Astrocyte of the cerebellum (primary cell): ENCODE measurements at regions of chr2 and their contacts with region 1.

Region 1: GRCh38 chr2:120589771-120590608 is 145.7 kb upstream of the GLI2 start:
- DNase-seq: peak; percentile 94
- H3K4me3 ChIP-seq: no peak overlapping the region
- CTCF ChIP-seq: no peak

Region 2: DNA sequence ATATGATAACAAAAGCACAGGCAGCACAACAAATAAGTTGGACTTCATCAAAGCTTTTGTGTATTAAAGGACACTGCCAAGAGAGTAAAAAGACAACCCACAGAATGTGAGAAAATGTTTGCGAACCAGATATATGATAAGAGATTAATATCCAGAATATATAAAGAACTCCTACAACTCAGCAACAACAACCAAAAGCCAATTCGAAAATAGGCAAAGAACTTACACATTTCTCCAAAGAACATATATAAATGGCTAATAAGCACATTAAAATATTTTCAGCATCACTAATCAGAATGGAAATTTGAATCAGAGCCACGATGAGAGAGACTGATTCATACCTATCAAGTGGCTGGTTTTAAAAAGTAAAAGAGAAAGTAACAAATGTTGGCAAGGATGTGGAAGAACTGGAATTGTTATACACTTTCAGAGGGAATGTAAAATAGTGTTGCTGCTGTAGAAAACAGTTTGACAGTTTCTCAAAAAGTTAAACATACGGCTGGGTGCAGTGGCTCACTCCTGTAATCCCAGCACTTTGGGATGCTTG is 551.9 kb before region 1 on chr2:
- in situ Hi-C with region 1: no loop called
- DNase-seq: no peak
- H3K4me3 ChIP-seq: no peak overlapping the region
- CTCF ChIP-seq: no peak

Region 3: GRCh38 chr2:120546048-120546864 is 43.7 kb before region 1 on chr2:
- in situ Hi-C with region 1: loop called (anchors 5 kb)
- DNase-seq: peak; percentile 59
- H3K4me3 ChIP-seq: no peak overlapping the region
- CTCF ChIP-seq: no peak

Region 4: DNA sequence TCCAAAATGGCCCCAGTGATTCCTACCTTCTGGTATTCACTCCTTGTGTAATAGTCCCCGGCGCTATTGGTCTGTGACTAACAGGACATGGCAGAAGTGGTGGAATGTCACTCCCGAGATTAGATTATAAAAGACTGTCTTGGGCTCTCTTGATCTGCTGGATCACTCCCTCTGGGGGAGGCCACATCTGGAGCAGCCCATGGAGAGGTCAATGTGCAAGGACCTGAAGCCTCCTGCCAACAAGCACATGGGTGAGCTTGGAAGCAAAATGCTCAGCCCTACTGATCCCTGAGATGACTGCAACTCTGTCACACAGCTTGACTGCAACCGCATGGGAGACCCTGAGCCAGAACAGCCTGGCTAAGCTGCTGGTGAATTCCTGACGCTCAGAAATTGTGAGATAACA is 51.4 kb after region 1 on chr2:
- in situ Hi-C with region 1: loop called (anchors 5 kb)
- DNase-seq: peak; percentile 36
- H3K4me3 ChIP-seq: no peak overlapping the region
- CTCF ChIP-seq: no peak